H1 (cell line): ENCODE measurements at regions of chr14 and their contacts with region 1.

Region 1: DNA sequence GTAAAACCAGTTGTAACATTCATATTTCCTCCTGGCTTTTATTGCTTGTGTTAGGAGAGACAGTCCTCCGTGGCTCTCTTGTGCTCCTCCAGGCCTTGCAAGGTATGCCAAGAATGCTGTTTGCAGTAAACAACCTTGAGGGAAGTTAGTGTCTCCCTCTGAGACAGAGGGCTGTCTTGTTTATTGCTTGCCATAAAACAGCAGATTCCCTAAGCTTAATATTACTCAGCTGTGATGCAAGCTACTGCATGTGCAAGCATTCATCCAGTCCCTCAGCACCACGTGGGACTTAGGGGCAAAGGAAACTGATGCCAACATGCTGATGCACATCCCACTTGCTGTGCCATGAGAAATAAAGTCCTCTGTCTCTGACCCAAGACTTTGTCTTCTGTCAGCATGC is 6.6 kb downstream of the POMT2 start:
- DNase-seq: no peak
- H3K4me3 ChIP-seq: no peak overlapping the region
- H3K27ac ChIP-seq: peak overlapping the region; percentile 73; the same call in 1 of the 2 replicates
- H3K4me1 ChIP-seq: peaks cover 11 to 25% (median 14%) of the 10 kb centered on the region in 4 experiments; a peak in 6 of 7 replicates
- H3K27me3 ChIP-seq: no peaks in the 10 kb centered on the region
- CTCF ChIP-seq: no peak
- EP300 ChIP-seq: peak in 1 of 2 experiments; percentile 50; a peak in 1 of 3 replicates
- POLR2A ChIP-seq: no peak
- RAD21 ChIP-seq: peak in 1 of 2 experiments; percentile 16; a peak in 2 of 4 replicates

Region 2: GRCh38 chr14:77151918-77152588 is 162.0 kb before region 1 on chr14:
- CTCF ChIA-PET with region 1: interaction called, 35 read pairs
- POLR2A ChIA-PET with region 1: no interaction called
- DNase-seq: no peak
- H3K4me3 ChIP-seq: no peak overlapping the region
- H3K27ac ChIP-seq: no peak overlapping the region
- H3K4me1 ChIP-seq: peaks cover 2 to 15% (median 2%) of the 10 kb centered on the region in 4 experiments; a peak in 3 of 7 replicates
- H3K27me3 ChIP-seq: no peaks in the 10 kb centered on the region
- CTCF ChIP-seq: peak in 1 of 3 experiments; percentile 12; a peak in 1 of 4 replicates
- EP300 ChIP-seq: no peak
- POLR2A ChIP-seq: no peak
- RAD21 ChIP-seq: peak; percentile 29 to 43

Region 3: DNA sequence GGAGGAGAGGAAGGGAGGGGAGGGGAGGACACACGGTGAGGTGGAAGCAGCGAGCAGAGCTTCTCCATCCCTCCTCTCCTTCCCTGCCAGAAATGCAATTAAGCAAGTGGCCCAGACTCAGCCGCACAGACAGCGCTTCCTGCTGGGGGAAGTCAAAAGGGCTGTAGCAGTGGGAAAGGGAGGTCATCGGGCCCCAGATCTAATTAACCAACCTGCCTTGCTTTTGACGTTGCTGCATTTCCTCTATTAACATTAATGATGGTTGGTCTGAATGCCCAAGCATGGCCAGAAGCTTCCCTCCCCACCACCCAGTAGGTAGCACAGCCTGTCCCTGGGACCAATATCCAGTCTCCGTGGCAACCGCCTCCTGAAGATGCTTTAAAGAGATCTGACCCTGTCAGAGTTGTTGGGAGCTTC is 38.4 kb before region 1 on chr14:
- CTCF ChIA-PET with region 1: interaction called, 27 read pairs
- POLR2A ChIA-PET with region 1: no interaction called
- DNase-seq: no peak
- H3K4me3 ChIP-seq: no peak overlapping the region
- H3K27ac ChIP-seq: no peak overlapping the region
- H3K4me1 ChIP-seq: peaks cover 0 to 4% (median 3%) of the 10 kb centered on the region in 4 experiments; a peak in 2 of 7 replicates
- H3K27me3 ChIP-seq: peaks cover 8 to 24% (median 23%) of the 10 kb centered on the region in 4 experiments
- CTCF ChIP-seq: peak; percentile 36 to 44 (median 38); a peak in 3 of 4 replicates
- EP300 ChIP-seq: no peak
- POLR2A ChIP-seq: no peak
- RAD21 ChIP-seq: peak; percentile 48 to 57

Region 4: DNA sequence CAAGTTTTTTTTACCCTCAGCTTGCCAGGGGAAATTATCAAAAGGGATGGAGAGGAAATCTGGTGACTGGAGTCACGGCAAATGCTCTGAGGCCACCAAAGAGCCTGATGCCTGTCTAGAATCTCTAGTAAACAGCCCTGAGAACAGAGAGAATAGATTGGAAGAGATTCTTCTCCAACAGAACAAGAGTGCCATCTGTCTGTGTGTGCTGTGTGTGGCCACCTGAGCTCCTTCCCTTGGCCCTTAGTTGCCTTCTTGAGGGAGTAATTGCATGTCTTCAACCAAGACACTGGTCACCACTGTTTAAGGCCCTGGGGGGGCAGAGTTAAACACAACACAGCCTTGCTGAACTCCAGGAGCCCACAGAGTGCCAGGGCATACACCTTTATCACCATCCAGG is 12.1 kb after region 1 on chr14:
- CTCF ChIA-PET with region 1: interaction called, 40 read pairs
- POLR2A ChIA-PET with region 1: interaction called, 3 read pairs
- DNase-seq: no peak
- H3K4me3 ChIP-seq: no peak overlapping the region
- H3K27ac ChIP-seq: no peak overlapping the region
- H3K4me1 ChIP-seq: peaks cover 4 to 11% (median 7%) of the 10 kb centered on the region in 4 experiments; a peak in 6 of 7 replicates
- H3K27me3 ChIP-seq: no peaks in the 10 kb centered on the region
- CTCF ChIP-seq: no peak
- EP300 ChIP-seq: no peak
- POLR2A ChIP-seq: no peak
- RAD21 ChIP-seq: peak in 1 of 2 experiments; percentile 21; a peak in 1 of 4 replicates

Region 5: GRCh38 chr14:77409131-77409533 is 95.1 kb after region 1 on chr14:
- CTCF ChIA-PET with region 1: interaction called, 10 read pairs
- POLR2A ChIA-PET with region 1: no interaction called
- DNase-seq: peak in 1 of 2 experiments; percentile 50
- H3K4me3 ChIP-seq: no peak overlapping the region
- H3K27ac ChIP-seq: no peak overlapping the region
- H3K4me1 ChIP-seq: no peaks in the 10 kb centered on the region
- H3K27me3 ChIP-seq: no peaks in the 10 kb centered on the region
- CTCF ChIP-seq: peak; percentile 41 to 56 (median 52)
- EP300 ChIP-seq: no peak
- POLR2A ChIP-seq: no peak
- RAD21 ChIP-seq: peak in 1 of 2 experiments; percentile 52; a peak in 2 of 4 replicates